PC-3 (cell line): ENCODE measurements at regions of chr2 and their contacts with region 1.

Region 1: DNA sequence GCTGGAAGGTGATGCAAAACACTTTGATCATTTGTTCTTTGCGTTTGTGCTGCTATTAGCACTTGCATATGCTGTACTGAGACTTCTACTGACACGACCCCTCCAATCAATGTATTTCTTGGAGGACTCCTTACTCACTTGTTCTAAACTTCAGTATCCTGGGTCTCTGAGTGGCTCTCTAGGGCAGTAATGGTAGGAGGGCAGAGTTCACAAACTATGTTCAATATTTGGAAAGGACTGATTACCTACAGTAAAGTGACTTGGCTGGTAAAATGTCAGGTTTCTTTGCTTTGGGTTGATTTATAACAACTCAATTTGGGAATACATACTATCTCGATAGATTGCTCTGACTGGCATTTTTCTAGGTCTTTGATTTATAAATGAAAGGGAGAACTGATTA is 93.7 kb downstream of the TRIM43 start:
- DNase-seq: no peak
- ATAC-seq: no peak
- H3K4me3 ChIP-seq: peak overlapping the region; percentile 11; the same call in 1 of the 2 replicates
- H3K27ac ChIP-seq: peak overlapping the region; percentile 85
- H3K4me1 ChIP-seq: peaks cover 46% of the 10 kb centered on the region
- H3K27me3 ChIP-seq: no peaks in the 10 kb centered on the region
- CTCF ChIP-seq: no peak

Region 2: GRCh38 chr2:95728878-95729596 is 43.5 kb after region 1 on chr2:
- CTCF ChIA-PET with region 1: no interaction called
- POLR2A ChIA-PET with region 1: no interaction called
- intact Hi-C with region 1: loop called (anchors 1 kb)
- DNase-seq: peak; percentile 92
- ATAC-seq: peak; percentile 97
- H3K4me3 ChIP-seq: no peak overlapping the region
- H3K27ac ChIP-seq: no peak overlapping the region
- H3K4me1 ChIP-seq: no peaks in the 10 kb centered on the region
- H3K27me3 ChIP-seq: no peaks in the 10 kb centered on the region
- CTCF ChIP-seq: peak; percentile 80